ENCODE measurements at regions of chr5 and their contacts with region 1.

Region 1: DNA sequence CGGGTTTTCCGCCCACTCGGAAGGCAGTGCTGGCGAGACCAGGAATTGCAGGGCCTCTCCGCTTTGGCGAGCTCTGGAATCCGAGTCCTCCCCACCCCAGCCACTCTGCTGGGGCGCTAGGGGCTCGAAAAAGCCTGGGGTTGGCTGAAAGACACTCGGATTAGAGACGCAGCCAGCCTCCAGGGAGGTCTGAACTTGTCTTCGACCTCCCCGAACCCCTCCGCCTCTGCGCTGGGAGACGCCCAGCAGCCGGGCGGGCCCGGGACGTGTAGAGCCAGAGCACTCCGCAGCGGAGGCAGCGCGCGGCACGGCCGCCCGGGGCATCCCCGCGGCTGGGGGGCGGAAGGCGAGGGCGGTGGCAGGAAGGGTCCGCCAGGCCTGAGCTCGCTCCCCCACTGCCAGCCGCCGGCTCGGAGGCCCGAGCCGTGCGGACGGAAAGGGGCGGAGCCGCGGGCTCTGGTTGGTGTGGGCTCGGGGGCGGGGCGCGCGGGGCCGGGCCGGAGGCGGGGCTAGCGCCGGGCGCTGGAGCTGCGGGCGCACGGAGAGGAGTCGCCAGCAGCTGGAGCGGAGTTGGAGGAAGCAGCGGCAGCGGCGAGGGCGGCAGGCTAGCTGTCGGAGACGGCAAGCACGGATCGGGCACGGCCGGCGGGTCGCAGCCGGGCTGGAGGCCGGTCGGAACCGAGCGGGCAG is at the start of gene PIK3R1:
- DNase-seq: peak; percentile 91 to 94 (median 92)
- H3K4me3 ChIP-seq: peak within 1 kb of the TSS; percentile 85 to 89
- H3K4me3 Mint-ChIP-seq: peak within 1 kb of the TSS; percentile 91 to 97 (median 94)
- H3K27ac ChIP-seq: peak within 1 kb of the TSS; percentile 80
- H3K27ac Mint-ChIP-seq: peak within 1 kb of the TSS; percentile 93 to 96 (median 95)
- H3K4me1 ChIP-seq: peaks cover 43% of the 10 kb centered on the region
- H3K4me1 Mint-ChIP-seq: peaks cover 37 to 51% (median 46%) of the 10 kb centered on the region in 4 donors
- H3K27me3 ChIP-seq: no peaks in the 10 kb centered on the region
- H3K27me3 Mint-ChIP-seq: no peaks in the 10 kb centered on the region
- total RNA-seq, gene PIK3R1: 151 to 152 TPM

Region 2: DNA sequence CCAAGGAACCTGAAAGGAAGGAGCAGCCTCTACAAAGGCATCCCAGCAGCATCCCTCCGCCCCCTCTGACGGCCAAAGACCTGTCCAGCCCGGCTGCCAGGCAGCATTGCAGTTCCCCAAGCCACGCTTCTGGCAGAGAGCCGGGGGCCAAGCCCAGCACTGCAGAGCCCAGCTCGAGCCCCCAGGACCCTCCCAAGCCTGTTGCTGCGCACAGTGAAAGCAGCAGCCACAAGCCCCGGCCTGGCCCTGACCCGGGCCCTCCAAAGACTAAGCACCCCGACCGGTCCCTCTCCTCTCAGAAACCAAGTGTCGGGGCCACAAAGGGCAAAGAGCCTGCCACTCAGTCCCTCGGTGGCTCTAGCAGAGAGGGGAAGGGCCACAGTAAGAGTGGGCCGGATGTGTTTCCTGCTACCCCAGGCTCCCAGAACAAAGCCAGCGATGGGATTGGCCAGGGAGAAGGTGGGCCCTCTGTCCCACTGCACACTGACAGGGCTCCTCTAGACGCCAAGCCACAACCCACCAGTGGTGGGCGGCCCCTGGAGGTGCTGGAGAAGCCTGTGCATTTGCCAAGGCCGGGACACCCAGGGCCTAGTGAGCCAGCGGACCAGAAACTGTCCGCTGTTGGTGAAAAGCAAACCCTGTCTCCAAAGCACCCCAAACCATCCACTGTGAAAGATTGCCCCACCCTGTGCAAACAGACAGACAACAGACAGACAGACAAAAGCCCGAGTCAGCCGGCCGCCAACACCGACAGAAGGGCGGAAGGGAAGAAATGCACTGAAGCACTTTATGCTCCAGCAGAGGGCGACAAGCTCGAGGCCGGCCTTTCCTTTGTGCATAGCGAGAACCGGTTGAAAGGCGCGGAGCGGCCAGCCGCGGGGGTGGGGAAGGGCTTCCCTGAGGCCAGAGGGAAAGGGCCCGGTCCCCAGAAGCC is 1049.6 kb before region 1 on chr5:
- CTCF ChIA-PET with region 1: interaction called, 4 read pairs
- POLR2A ChIA-PET with region 1: interaction called, 16 read pairs
- intact Hi-C with region 1: loop called (anchors 1 kb)
- DNase-seq: peak; percentile 80 to 86 (median 81)
- H3K4me3 ChIP-seq: peak overlapping the region; percentile 65 to 66
- H3K4me3 Mint-ChIP-seq: peak overlapping the region; percentile 89 to 96 (median 92)
- H3K27ac ChIP-seq: peak overlapping the region; percentile 86
- H3K27ac Mint-ChIP-seq: peak overlapping the region in 6 of 7 donors; percentile 97 to 98 (median 97)
- H3K4me1 ChIP-seq: peaks cover 94% of the 10 kb centered on the region
- H3K4me1 Mint-ChIP-seq: peaks cover 47 to 80% (median 65%) of the 10 kb centered on the region in 4 donors
- H3K27me3 ChIP-seq: no peaks in the 10 kb centered on the region
- H3K27me3 Mint-ChIP-seq: no peaks in the 10 kb centered on the region

Region 3: GRCh38 chr5:67963789-67964519 is 251.4 kb before region 1 on chr5:
- CTCF ChIA-PET with region 1: no interaction called
- POLR2A ChIA-PET with region 1: no interaction called
- intact Hi-C with region 1: no loop called
- DNase-seq: no peak
- H3K4me3 ChIP-seq: no peak overlapping the region
- H3K4me3 Mint-ChIP-seq: no peak overlapping the region
- H3K27ac ChIP-seq: no peak overlapping the region
- H3K27ac Mint-ChIP-seq: no peak overlapping the region
- H3K4me1 ChIP-seq: no peaks in the 10 kb centered on the region
- H3K4me1 Mint-ChIP-seq: no peaks in the 10 kb centered on the region
- H3K27me3 ChIP-seq: no peaks in the 10 kb centered on the region
- H3K27me3 Mint-ChIP-seq: peaks cover 0 to 1% of the 10 kb centered on the region in 2 donors

Region 4: DNA sequence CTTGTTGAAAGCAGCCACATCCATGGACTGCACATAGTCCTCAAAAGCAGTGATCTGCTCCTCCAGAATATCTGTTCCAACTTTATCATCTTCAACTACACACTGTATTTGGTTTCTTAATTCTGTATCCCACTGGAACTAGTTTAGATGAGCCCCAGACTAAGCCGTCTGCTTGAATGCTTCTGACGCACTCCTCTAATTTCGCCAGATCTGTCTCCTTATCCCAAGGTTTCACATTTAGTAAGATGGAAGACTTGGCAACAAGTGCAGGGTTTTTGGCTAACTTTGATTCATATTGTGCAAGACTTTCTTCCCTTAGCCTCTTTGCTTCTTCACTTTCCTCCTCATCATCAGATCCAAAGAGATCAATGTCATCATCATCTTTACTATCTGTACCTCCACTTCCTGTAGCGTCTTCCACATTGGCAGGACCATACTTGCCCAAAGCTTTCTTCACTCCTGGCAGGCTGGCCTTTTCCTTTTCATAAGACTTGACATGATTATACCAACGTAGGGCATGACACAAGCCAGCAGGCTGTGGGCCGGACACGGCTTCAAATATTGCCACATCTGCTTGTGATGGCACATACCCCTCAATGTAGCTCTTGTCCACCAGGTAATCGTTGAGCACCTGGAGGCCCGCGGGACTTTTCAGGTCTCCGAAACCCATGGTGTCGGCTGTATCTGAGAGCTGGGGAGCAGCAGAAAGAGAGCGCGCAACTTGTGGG is 56.0 kb before region 1 on chr5:
- CTCF ChIA-PET with region 1: no interaction called
- POLR2A ChIA-PET with region 1: no interaction called
- intact Hi-C with region 1: no loop called
- DNase-seq: no peak
- H3K4me3 ChIP-seq: no peak overlapping the region
- H3K4me3 Mint-ChIP-seq: no peak overlapping the region
- H3K27ac ChIP-seq: no peak overlapping the region
- H3K27ac Mint-ChIP-seq: no peak overlapping the region
- H3K4me1 ChIP-seq: no peaks in the 10 kb centered on the region
- H3K4me1 Mint-ChIP-seq: no peaks in the 10 kb centered on the region
- H3K27me3 ChIP-seq: no peaks in the 10 kb centered on the region
- H3K27me3 Mint-ChIP-seq: no peaks in the 10 kb centered on the region

Region 5: DNA sequence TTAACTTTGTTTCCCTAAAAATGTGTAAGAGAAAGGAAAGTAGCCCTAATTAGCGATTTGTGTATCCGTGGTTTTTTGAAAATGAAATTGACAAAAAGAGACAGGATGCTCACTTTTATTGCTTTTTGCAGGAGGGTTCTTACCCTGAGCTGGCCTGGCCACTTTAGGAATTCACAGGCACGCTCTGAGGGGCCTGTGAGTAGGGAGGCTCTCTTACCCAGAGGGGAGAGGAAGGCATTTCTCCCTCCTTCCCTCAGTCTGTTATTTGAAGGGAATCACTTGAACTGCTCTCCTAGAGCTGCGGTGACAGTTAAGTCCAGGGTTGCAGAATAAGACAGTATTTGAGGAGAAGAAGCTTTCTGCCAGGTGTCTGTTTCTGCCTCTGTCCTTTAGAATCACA is 16.9 kb after region 1 on chr5:
- CTCF ChIA-PET with region 1: interaction called, 19 read pairs
- POLR2A ChIA-PET with region 1: interaction called, 39 read pairs
- intact Hi-C with region 1: loop called (anchors 1 kb)
- DNase-seq: no peak
- H3K4me3 ChIP-seq: no peak overlapping the region
- H3K4me3 Mint-ChIP-seq: peak overlapping the region in 4 of 8 donors; percentile 1 to 81 (median 10)
- H3K27ac ChIP-seq: no peak overlapping the region
- H3K27ac Mint-ChIP-seq: peak overlapping the region; percentile 1 to 76 (median 60)
- H3K4me1 ChIP-seq: peaks cover 78% of the 10 kb centered on the region
- H3K4me1 Mint-ChIP-seq: peaks cover 69 to 88% (median 79%) of the 10 kb centered on the region in 4 donors
- H3K27me3 ChIP-seq: no peaks in the 10 kb centered on the region
- H3K27me3 Mint-ChIP-seq: no peaks in the 10 kb centered on the region

Region 6: DNA sequence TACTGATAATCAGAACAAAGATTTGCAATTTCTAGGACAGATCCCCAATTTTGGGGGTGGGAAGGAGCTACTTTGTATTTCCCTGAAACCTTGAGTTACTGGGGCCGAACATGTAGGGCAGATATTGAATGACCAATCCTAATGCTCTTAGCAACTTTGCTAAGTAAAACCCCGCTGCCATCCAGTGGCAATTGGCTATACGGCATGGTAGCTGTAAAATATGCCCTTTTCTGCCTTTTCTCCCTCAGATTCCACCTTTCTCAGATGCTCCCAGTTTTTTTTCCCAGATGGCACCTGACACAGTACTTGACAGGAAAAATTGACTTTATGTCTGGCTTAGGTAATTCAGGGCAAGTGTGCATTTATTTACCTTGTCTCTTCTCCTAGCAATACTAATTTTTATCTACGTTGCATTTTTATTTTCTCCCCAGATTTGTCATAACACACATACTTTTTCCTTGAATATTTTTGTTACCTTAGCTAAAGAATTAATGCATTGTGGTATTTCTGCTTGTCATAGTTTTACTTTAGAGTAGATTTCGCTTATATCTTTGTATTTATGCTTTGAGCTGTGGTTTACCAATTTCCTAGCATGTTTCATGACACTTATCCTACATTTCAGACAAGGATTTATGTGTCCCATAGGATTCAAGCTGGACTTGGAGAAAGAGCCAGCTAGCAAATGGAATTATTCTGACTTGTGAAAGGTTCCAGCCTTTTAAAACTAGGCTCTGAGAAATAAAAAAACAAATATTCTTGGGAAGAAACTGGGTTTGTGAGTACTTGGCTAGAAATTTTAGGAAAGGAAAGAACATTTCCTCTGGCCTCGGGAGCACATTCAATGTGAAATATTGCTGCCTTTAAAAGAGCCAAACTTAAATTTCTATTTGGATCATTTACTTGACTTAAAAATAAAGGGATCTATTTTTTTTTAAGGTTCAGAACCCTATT is 37.6 kb after region 1 on chr5:
- CTCF ChIA-PET with region 1: interaction called, 58 read pairs
- POLR2A ChIA-PET with region 1: interaction called, 73 read pairs
- intact Hi-C with region 1: loop called (anchors 1 kb)
- DNase-seq: peak in 3 of 5 donors; percentile 36 to 41 (median 38)
- H3K4me3 ChIP-seq: no peak overlapping the region
- H3K4me3 Mint-ChIP-seq: peak overlapping the region in 2 of 8 donors; percentile 52 to 66
- H3K27ac ChIP-seq: no peak overlapping the region
- H3K27ac Mint-ChIP-seq: peak overlapping the region in 5 of 7 donors; percentile 1 to 93 (median 62)
- H3K4me1 ChIP-seq: peaks cover 95% of the 10 kb centered on the region
- H3K4me1 Mint-ChIP-seq: peaks cover 79 to 97% (median 90%) of the 10 kb centered on the region in 4 donors
- H3K27me3 ChIP-seq: no peaks in the 10 kb centered on the region
- H3K27me3 Mint-ChIP-seq: no peaks in the 10 kb centered on the region

Region 7: GRCh38 chr5:68279984-68280383 is 64.6 kb after region 1 on chr5:
- CTCF ChIA-PET with region 1: interaction called, 7 read pairs
- POLR2A ChIA-PET with region 1: interaction called, 69 read pairs
- intact Hi-C with region 1: loop called (anchors 2 kb)
- DNase-seq: peak; percentile 78 to 88 (median 84)
- H3K4me3 ChIP-seq: peak overlapping the region; percentile 76 to 77
- H3K4me3 Mint-ChIP-seq: peak overlapping the region; percentile 89 to 97 (median 94)
- H3K27ac ChIP-seq: peak overlapping the region; percentile 66
- H3K27ac Mint-ChIP-seq: peak overlapping the region; percentile 89 to 99 (median 96)
- H3K4me1 ChIP-seq: peaks cover 81% of the 10 kb centered on the region
- H3K4me1 Mint-ChIP-seq: peaks cover 66 to 91% (median 75%) of the 10 kb centered on the region in 4 donors
- H3K27me3 ChIP-seq: no peaks in the 10 kb centered on the region
- H3K27me3 Mint-ChIP-seq: no peaks in the 10 kb centered on the region

Region 8: DNA sequence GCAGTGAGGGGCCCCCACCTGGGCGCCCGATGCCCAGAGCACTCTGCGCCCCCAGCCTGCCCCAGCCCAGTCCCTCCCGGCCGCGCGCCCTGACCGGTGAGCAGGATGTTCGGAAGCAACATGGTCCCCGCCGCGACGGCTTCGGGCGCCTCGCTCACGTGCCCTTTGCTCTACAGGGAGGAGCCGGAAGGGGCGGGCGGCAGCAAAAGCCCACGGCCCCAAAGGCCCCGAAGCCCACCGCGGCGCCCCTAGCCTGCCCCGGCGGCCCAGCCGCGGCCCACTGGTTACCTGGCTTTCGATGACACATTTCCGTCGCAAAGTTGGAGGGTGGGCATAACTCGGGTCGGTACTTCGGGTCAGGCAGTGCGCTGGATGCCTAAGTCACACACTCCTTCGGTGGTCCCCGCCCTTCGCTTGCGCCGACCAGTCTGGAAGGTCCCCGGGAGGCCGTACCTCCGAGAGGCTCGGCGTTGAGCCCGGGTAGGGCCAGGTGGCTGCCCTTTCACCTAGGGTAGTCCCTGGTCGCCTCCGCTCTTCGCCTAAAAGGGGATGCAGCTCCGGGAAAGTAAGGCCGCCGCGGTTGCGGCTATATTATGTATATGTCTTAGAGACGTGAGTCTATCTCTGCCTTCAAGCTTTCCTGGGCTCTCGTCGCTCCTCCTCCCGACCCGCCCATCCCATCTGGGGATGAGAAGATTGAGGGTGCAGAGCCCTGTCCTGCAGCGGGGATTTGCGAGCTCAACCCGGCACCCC is 1154.2 kb after region 1 on chr5 and contains the starts of genes AK6, RAD17 and TAF9:
- CTCF ChIA-PET with region 1: no interaction called
- POLR2A ChIA-PET with region 1: no interaction called
- intact Hi-C with region 1: loop called (anchors 10 kb)
- DNase-seq: peak; percentile 94 to 98 (median 96)
- H3K4me3 ChIP-seq: peak within 1 kb of the TSS; percentile 67 to 75
- H3K4me3 Mint-ChIP-seq: peak within 1 kb of the TSS; percentile 95 to 99 (median 98)
- H3K27ac ChIP-seq: peak within 1 kb of the TSS; percentile 99
- H3K27ac Mint-ChIP-seq: peak within 1 kb of the TSS; percentile 99 to 100 (median 99)
- H3K4me1 ChIP-seq: peaks cover 29% of the 10 kb centered on the region
- H3K4me1 Mint-ChIP-seq: peaks cover 24 to 67% (median 46%) of the 10 kb centered on the region in 4 donors
- H3K27me3 ChIP-seq: no peaks in the 10 kb centered on the region
- H3K27me3 Mint-ChIP-seq: no peaks in the 10 kb centered on the region
- total RNA-seq, gene AK6: 25.3 to 31.4 TPM
- total RNA-seq, gene RAD17: 30.7 to 31.1 TPM
- total RNA-seq, gene TAF9: 42.3 to 45.9 TPM